ENCODE measurements at regions of chr18 and their contacts with region 1.

Region 1: GRCh38 chr18:36067055-36067957 is at the start of gene RPRD1A:
- DNase-seq: peak; percentile 99
- ATAC-seq: peak; percentile 96
- H3K4me3 Mint-ChIP-seq: peak within 1 kb of the TSS; percentile 78
- H3K27ac Mint-ChIP-seq: peak within 1 kb of the TSS; percentile 89
- H3K4me1 Mint-ChIP-seq: peaks cover 29% of the 10 kb centered on the region
- H3K27me3 Mint-ChIP-seq: peaks cover 3% of the 10 kb centered on the region
- total RNA-seq, gene RPRD1A: 27.9 to 32.1 TPM

Region 2: GRCh38 chr18:34867520-34867919 is 1199.8 kb before region 1 on chr18:
- CTCF ChIA-PET with region 1: no interaction called
- POLR2A ChIA-PET with region 1: no interaction called
- intact Hi-C with region 1: loop called in 1 of 2 experiments (anchors 10 kb)
- DNase-seq: peak; percentile 34
- ATAC-seq: no peak
- H3K4me3 Mint-ChIP-seq: no peak overlapping the region
- H3K27ac Mint-ChIP-seq: peak overlapping the region; percentile 67
- H3K4me1 Mint-ChIP-seq: peaks cover 47% of the 10 kb centered on the region
- H3K27me3 Mint-ChIP-seq: peaks cover 3% of the 10 kb centered on the region

Region 3: GRCh38 chr18:35343936-35344735 is 723.2 kb before region 1 on chr18 and contains the start of gene ZNF24:
- CTCF ChIA-PET with region 1: no interaction called
- POLR2A ChIA-PET with region 1: no interaction called
- intact Hi-C with region 1: loop called in 1 of 2 experiments (anchors 1 kb)
- DNase-seq: peak; percentile 96
- ATAC-seq: peak; percentile 93
- H3K4me3 Mint-ChIP-seq: peak within 1 kb of the TSS; percentile 86
- H3K27ac Mint-ChIP-seq: peak within 1 kb of the TSS; percentile 94
- H3K4me1 Mint-ChIP-seq: peaks cover 38% of the 10 kb centered on the region
- H3K27me3 Mint-ChIP-seq: no peaks in the 10 kb centered on the region
- total RNA-seq, gene ZNF24: 31.7 to 50.9 TPM

Region 4: DNA sequence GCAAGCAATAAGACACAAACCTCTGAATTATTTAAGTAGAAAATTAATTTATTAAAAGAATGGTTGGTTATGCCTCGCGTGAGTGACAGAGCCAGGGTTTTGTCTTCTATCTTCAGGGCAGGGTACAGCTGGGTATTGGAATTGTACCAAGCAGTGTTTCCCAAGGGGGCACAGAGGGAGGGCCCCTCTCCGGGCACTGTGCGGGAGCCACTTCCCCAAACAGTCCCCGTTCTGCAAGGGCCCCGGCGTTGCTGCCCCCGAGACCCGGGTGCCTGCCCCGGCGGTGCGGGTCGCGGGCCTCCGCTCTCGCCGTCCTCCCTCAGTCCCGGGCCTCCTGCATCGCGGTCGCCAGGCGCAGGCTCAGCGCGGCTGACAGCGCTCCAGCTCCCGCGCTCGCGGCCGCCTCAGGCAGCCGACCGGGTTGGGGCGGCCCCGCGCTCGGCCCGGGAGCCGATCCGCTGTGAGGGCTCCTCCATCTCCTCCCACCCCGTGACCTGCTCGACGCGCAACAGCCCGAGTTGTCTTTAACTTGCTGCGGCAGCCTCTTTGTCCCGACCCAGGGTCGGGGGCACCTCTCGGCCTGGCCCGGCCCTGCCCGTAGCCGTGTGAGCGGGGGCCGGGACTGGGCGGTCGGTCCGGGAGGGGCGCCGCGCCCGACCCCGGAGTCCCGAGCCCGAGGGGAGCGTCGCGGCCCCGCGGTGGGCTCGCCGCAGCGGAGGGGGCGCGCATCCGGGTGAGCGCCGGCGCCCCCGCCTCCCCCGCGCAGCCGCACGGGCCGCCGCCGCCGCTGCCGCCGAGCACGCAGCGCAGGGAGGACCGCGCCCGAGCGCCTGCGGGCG is 486.4 kb before region 1 on chr18:
- CTCF ChIA-PET with region 1: no interaction called
- POLR2A ChIA-PET with region 1: no interaction called
- intact Hi-C with region 1: loop called in 1 of 2 experiments (anchors 10 kb)
- DNase-seq: peak; percentile 72
- ATAC-seq: peak; percentile 61
- H3K4me3 Mint-ChIP-seq: peak overlapping the region; percentile 69
- H3K27ac Mint-ChIP-seq: peak overlapping the region; percentile 37
- H3K4me1 Mint-ChIP-seq: peaks cover 35% of the 10 kb centered on the region
- H3K27me3 Mint-ChIP-seq: peaks cover 17% of the 10 kb centered on the region

Region 5: DNA sequence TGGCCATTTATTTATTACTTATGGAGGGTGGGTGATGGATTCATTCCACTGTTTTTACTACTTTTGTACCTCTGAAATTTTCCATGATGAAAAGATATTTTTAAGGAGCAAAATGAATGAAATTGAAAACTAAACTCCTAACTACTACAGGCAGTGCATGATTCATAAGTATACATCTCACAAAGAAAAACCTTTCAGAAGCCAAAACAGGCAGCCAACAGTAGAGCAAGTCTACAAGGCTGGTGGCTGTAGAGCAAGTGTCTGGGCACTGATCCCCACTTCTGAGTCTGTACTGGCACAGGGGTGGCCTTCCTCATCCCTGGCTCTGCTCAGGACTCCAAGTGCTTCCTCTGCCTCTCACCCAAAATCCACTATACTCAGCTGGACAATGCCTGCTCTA is 103.0 kb before region 1 on chr18:
- CTCF ChIA-PET with region 1: no interaction called
- POLR2A ChIA-PET with region 1: no interaction called
- intact Hi-C with region 1: no loop called
- DNase-seq: no peak
- ATAC-seq: peak; percentile 85
- H3K4me3 Mint-ChIP-seq: no peak overlapping the region
- H3K27ac Mint-ChIP-seq: peak overlapping the region; percentile 77
- H3K4me1 Mint-ChIP-seq: peaks cover 22% of the 10 kb centered on the region
- H3K27me3 Mint-ChIP-seq: no peaks in the 10 kb centered on the region

Region 6: GRCh38 chr18:36023336-36023735 is 44.0 kb before region 1 on chr18:
- CTCF ChIA-PET with region 1: interaction called, 5 read pairs
- POLR2A ChIA-PET with region 1: no interaction called
- intact Hi-C with region 1: loop called in 1 of 2 experiments (anchors 2 kb)
- DNase-seq: no peak
- ATAC-seq: no peak
- H3K4me3 Mint-ChIP-seq: no peak overlapping the region
- H3K27ac Mint-ChIP-seq: no peak overlapping the region
- H3K4me1 Mint-ChIP-seq: peaks cover 10% of the 10 kb centered on the region
- H3K27me3 Mint-ChIP-seq: no peaks in the 10 kb centered on the region

Region 7: GRCh38 chr18:36828630-36829361 is 761.5 kb after region 1 on chr18 and contains the starts of genes KIAA1328 and TPGS2:
- CTCF ChIA-PET with region 1: no interaction called
- POLR2A ChIA-PET with region 1: no interaction called
- intact Hi-C with region 1: loop called in 1 of 2 experiments (anchors 1 kb)
- DNase-seq: peak; percentile 92
- ATAC-seq: peak; percentile 92
- H3K4me3 Mint-ChIP-seq: peak within 1 kb of the TSS; percentile 77
- H3K27ac Mint-ChIP-seq: peak within 1 kb of the TSS; percentile 95
- H3K4me1 Mint-ChIP-seq: peaks cover 35% of the 10 kb centered on the region
- H3K27me3 Mint-ChIP-seq: no peaks in the 10 kb centered on the region
- total RNA-seq, gene KIAA1328: 5.8 to 7.4 TPM
- total RNA-seq, gene TPGS2: 87.6 to 158 TPM